ENCODE measurements at regions of chr7 and their contacts with region 1.

Region 1: DNA sequence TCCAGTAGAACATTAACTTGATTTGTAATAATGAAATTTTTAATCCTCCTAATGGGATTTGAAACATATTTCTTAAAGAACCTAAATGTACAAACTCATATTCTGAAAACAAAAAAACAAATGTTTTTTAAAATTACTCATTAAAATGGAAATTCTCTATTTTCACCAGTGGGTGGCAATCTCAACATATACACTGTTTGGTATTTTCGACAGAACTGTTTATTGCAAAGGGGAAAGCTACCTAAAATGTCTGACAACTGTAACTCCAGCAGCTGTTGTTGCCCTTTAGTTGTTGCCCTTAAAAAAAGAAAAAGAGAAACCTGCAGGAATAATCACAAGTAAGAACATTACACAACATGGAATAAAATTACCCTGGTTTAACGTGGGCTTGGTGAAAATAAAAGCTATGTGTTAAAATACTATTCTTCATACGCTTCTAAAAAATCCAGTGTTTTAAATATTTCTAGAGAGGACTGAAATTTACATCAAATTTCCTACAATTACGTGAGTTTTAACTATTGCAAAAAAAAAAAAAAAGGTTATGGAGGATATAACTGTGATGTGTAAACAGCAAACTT is 54.5 kb downstream of the COL1A2 start:
- DNase-seq: peak; percentile 55
- ATAC-seq: peak; percentile 67
- H3K4me3 ChIP-seq: no peak overlapping the region
- H3K27ac ChIP-seq: no peak overlapping the region
- H3K4me1 ChIP-seq: peaks cover 1% of the 10 kb centered on the region; the same call in 1 of the 2 replicates
- H3K27me3 ChIP-seq: peaks cover 2% of the 10 kb centered on the region
- CTCF ChIP-seq: peak; percentile 76
- POLR2A ChIP-seq: no peak
- RAD21 ChIP-seq: peak; percentile 78

Region 2: DNA sequence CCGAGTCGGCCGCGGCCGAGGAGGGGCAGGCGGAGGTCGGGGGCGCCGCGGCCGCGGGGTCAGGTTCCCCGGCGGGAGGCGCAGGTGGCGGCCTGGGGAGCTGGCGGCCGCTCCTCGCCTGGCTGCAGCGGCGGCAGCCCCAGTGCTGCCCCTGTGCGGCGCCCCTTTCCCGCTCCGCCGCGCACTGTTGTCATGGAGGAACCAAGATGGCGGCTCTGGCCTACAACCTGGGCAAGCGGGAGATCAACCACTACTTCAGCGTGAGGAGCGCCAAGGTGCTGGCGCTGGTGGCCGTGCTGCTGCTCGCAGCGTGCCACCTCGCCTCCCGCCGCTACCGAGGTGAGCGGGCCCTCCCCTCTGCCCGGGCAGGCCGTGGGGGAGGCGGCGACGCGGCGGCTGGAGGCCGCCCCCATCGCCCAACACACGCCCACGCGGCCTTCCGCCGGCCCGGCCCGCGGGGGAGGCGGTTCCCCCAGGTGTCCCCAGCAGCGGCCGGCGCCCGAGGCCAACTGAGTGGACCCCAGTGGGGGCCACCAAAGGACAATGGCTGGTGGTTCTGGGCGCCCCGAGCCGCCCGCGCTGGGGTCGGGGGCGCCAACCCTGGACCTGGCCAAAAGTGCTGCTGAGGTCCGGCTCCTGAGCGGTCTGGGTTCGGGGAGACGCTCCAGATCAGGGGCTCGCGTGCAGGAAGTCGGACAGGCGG is 60.8 kb after region 1 on chr7:
- CTCF ChIA-PET with region 1: interaction called, 3 read pairs
- POLR2A ChIA-PET with region 1: no interaction called
- dilution Hi-C with region 1: no loop called
- in situ Hi-C with region 1: no loop called
- intact Hi-C with region 1: loop called (anchors 1 kb)
- DNase-seq: peak; percentile 53
- ATAC-seq: peak; percentile 91
- H3K4me3 ChIP-seq: peak overlapping the region; percentile 96
- H3K27ac ChIP-seq: peak overlapping the region; percentile 90
- H3K4me1 ChIP-seq: peaks cover 3% of the 10 kb centered on the region
- H3K27me3 ChIP-seq: no peaks in the 10 kb centered on the region
- CTCF ChIP-seq: peak; percentile 39
- POLR2A ChIP-seq: 0 out of 2 replicates have a peak, but pooled peaks have one; percentile 45
- RAD21 ChIP-seq: peak; percentile 34

Region 3: GRCh38 chr7:94657771-94658693 is 208.8 kb after region 1 on chr7:
- CTCF ChIA-PET with region 1: no interaction called
- POLR2A ChIA-PET with region 1: no interaction called
- dilution Hi-C with region 1: no loop called
- in situ Hi-C with region 1: no loop called
- intact Hi-C with region 1: loop called (anchors 2 kb)
- DNase-seq: peak; percentile 90
- ATAC-seq: peak; percentile 91
- H3K4me3 ChIP-seq: peak overlapping the region; percentile 58
- H3K27ac ChIP-seq: no peak overlapping the region
- H3K4me1 ChIP-seq: no peaks in the 10 kb centered on the region
- H3K27me3 ChIP-seq: no peaks in the 10 kb centered on the region
- CTCF ChIP-seq: no peak
- POLR2A ChIP-seq: no peak
- RAD21 ChIP-seq: no peak

Region 4: DNA sequence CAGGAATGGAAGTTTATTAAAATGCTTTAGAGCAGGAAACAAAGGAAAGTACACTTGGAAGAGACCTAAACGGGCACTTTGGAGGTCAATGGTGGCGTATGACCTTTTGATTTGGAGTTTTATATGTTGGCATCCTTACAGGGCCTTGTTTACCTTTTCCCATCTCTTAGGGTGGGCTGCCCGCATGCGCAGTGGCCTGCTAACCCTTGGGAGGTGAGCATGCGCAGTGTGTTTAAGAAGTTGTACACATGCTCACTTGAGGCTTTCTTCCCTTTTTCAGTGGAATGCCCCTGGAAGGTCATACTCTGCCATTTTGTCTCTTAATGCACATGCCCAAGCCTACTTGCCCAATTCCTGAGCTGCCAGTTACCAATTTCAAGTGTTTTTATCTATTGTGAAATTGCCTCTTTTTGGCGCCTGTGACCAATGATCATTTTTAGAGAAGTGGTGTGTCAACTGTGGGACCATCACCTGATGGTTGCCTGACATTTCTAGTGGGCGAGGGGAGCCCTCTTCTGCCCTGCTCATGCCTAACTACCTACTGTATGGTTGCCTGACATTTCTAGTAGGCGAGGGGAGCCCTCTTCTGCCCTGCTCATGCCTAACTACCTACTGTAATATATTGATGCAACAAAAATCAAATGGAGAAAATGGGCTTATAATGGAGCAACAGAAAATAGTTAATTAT is 596.1 kb after region 1 on chr7:
- CTCF ChIA-PET with region 1: interaction called, 3 read pairs
- POLR2A ChIA-PET with region 1: no interaction called
- dilution Hi-C with region 1: no loop called
- in situ Hi-C with region 1: no loop called
- intact Hi-C with region 1: loop called (anchors 5 kb)
- DNase-seq: no peak
- ATAC-seq: no peak
- H3K4me3 ChIP-seq: no peak overlapping the region
- H3K27ac ChIP-seq: no peak overlapping the region
- H3K4me1 ChIP-seq: no peaks in the 10 kb centered on the region
- H3K27me3 ChIP-seq: no peaks in the 10 kb centered on the region
- CTCF ChIP-seq: no peak
- POLR2A ChIP-seq: no peak
- RAD21 ChIP-seq: no peak; the same call in 1 of the 2 replicates

Region 5: DNA sequence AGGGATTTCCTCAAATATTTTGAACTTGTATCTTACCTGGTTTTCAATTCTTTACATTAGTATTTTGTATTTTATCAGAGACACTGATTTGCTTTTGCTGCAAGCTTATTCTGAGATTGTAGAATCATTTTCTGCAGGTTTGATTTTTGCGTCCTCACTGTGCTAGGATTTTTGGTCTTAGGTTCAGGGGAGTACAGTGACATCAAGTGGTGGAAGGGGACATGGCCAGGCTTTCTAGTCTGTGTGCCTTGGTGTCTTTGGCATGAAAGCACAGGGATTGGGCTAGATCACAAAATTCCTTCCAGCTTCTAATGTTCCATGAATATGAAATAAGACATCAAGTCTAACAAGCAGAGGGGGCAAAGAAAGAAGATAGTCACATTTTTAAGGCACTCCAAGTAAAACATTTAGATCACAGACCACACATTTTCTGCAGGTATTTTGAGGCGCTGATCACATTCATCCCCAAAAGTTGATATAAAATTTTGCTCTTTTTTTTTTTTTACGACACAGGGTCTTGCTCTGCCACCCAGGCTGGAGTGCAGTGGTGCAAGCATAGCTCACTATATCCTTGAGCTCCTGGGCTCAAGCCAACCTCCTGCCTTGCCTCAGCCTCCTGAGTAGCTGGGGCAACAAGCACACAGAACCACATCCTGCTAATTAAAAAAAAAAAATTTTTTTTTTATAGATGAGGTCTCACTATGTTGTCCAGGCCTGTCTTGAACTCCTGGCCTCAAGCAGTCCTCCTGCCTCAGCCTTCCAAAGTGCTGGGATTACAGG is 750.7 kb after region 1 on chr7:
- CTCF ChIA-PET with region 1: interaction called, 18 read pairs
- POLR2A ChIA-PET with region 1: no interaction called
- dilution Hi-C with region 1: no loop called
- in situ Hi-C with region 1: loop called (anchors 25 kb)
- intact Hi-C with region 1: loop called (anchors 1 kb)
- DNase-seq: peak; percentile 33
- ATAC-seq: peak; percentile 72
- H3K4me3 ChIP-seq: no peak overlapping the region
- H3K27ac ChIP-seq: no peak overlapping the region
- H3K4me1 ChIP-seq: no peaks in the 10 kb centered on the region
- H3K27me3 ChIP-seq: no peaks in the 10 kb centered on the region
- CTCF ChIP-seq: peak; percentile 52
- POLR2A ChIP-seq: no peak
- RAD21 ChIP-seq: peak; percentile 61

Region 6: GRCh38 chr7:95246831-95247370 is 797.7 kb after region 1 on chr7:
- CTCF ChIA-PET with region 1: interaction called, 8 read pairs
- POLR2A ChIA-PET with region 1: no interaction called
- dilution Hi-C with region 1: no loop called
- in situ Hi-C with region 1: no loop called
- intact Hi-C with region 1: loop called (anchors 1 kb)
- DNase-seq: peak; percentile 62
- ATAC-seq: peak; percentile 76
- H3K4me3 ChIP-seq: no peak overlapping the region
- H3K27ac ChIP-seq: no peak overlapping the region
- H3K4me1 ChIP-seq: no peaks in the 10 kb centered on the region
- H3K27me3 ChIP-seq: peaks cover 4% of the 10 kb centered on the region
- CTCF ChIP-seq: peak; percentile 69
- POLR2A ChIP-seq: no peak
- RAD21 ChIP-seq: peak; percentile 72